ENCODE measurements at regions of chr20 and their contacts with region 1.

Region 1: DNA sequence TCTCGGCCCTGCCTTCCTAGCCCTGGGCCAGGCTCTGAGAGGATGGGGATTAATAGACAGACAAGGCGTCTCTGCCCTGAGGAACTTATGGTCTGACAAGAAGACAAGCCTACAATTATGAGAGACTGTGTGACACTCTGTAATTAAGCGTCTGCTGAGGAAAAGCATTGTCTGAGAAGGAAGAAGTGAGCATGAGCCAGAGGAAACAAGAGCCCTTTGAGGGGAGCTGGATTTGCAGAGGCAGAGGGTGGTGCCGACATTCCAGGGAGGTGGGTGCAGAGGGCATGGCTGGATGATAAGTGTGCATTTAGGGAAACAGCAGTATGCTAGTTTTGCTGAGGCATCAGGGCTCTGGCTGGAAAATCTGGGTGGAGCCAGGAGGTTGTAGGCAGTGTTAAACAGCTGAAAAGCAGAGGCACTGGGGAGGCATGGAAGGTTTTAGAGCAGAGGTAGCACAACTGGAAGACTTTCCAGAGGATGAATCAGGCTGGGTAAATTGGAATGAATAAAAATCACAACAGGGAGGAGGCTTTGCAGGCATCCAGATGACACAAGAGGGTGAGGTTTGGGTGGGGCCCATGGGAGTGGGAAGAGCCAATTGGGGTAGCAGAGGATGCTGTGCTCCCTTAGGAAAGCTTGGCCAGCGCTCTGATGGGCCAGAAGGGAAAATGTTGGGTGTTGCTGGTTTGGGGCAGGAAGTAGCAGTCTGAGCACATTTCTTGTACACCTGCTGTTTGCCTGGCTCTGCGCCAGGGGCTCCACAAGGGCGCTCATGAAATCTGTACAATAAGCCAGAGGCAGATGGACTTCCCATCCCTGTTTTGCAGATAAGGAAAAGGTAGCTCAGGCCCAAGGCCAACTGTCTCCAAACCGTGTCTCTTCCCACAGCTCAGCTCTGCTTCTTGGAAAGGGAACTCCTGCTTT is 74.0 kb upstream of the MYL9 start:
- DNase-seq: peak in 8 of 9 donors; percentile 43 to 67 (median 58)
- ATAC-seq: peak; percentile 41
- H3K4me3 ChIP-seq: peak overlapping the region; percentile 28
- H3K4me3 Mint-ChIP-seq: peak overlapping the region; percentile 60 to 81 (median 75)
- H3K27ac ChIP-seq: peak overlapping the region; percentile 64
- H3K27ac Mint-ChIP-seq: peak overlapping the region; percentile 72 to 96 (median 81)
- H3K4me1 ChIP-seq: peaks cover 53 to 74% of the 10 kb centered on the region in 2 donors
- H3K4me1 Mint-ChIP-seq: peaks cover 67 to 93% (median 81%) of the 10 kb centered on the region in 7 donors
- H3K27me3 ChIP-seq: no peaks in the 10 kb centered on the region
- H3K27me3 Mint-ChIP-seq: no peaks in the 10 kb centered on the region

Region 2: GRCh38 chr20:36493013-36493800 is 25.9 kb after region 1 on chr20:
- CTCF ChIA-PET with region 1: interaction called, 5 read pairs
- POLR2A ChIA-PET with region 1: interaction called, 7 read pairs
- intact Hi-C with region 1: loop called (anchors 1 to 2 kb)
- DNase-seq: no peak
- ATAC-seq: no peak
- H3K4me3 ChIP-seq: no peak overlapping the region
- H3K4me3 Mint-ChIP-seq: peak overlapping the region in 3 of 10 donors; percentile 1 to 77 (median 63)
- H3K27ac ChIP-seq: peak overlapping the region; percentile 68
- H3K27ac Mint-ChIP-seq: peak overlapping the region in 4 of 9 donors; percentile 27 to 92 (median 86)
- H3K4me1 ChIP-seq: peaks cover 23 to 24% of the 10 kb centered on the region in 2 donors
- H3K4me1 Mint-ChIP-seq: peaks cover 30 to 54% (median 46%) of the 10 kb centered on the region in 7 donors
- H3K27me3 ChIP-seq: no peaks in the 10 kb centered on the region
- H3K27me3 Mint-ChIP-seq: no peaks in the 10 kb centered on the region

Measured in naive thymus-derived CD4-positive, alpha-beta T cell (primary cell).